ENCODE measurements at regions of chr14 and their contacts with region 1.

Region 1: DNA sequence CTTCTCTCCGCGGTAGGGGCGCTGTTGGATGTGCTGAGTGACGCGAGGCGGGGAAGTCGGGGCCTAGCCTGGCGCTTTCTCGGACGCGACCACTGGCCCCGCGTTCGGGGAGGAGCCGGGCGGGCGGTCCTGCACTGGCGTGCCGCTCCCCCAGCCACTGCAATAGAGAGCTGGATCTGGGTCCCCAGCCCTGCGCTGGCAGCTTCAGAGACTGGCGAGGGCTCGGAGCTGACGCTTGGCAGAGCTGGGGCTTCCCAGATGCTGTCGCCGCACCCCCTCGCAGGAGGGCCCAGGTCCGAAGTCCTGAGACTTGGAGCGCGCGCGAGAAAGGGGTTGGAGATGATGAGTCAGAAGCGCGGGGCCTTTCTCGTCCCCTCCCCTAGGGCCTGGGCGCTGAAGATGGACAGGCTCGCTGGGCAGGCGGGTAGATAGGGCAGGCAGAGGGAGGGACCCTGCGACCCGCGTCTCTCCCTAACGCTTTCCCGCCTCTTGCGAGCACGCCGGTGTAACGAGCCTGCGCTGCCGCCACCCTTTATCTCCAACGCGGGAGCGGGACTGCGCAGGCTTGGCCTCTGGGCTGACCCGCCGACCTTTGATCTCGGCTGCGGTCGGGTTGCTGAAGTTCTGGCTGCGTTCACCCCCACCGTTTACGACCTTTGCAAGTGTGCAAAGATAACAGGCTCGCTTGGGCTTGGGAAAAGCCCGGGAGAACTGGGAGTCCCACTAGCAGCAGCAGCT is 3.0 kb downstream of the TMEM253 start:
- DNase-seq: peak; percentile 87 to 94 (median 92)
- ATAC-seq: peak; percentile 92
- H3K4me3 ChIP-seq: peak overlapping the region; percentile 94
- H3K4me3 Mint-ChIP-seq: peak overlapping the region; percentile 74 to 99 (median 91)
- H3K27ac ChIP-seq: peak overlapping the region; percentile 96
- H3K27ac Mint-ChIP-seq: peak overlapping the region; percentile 25 to 97 (median 89)
- H3K4me1 ChIP-seq: peaks cover 3 to 8% of the 10 kb centered on the region in 2 donors
- H3K4me1 Mint-ChIP-seq: peaks cover 23 to 41% (median 26%) of the 10 kb centered on the region in 7 donors
- H3K27me3 ChIP-seq: peaks cover 0 to 4% of the 10 kb centered on the region in 2 donors
- H3K27me3 Mint-ChIP-seq: peaks cover 0 to 11% (median 0%) of the 10 kb centered on the region in 5 donors

Region 2: DNA sequence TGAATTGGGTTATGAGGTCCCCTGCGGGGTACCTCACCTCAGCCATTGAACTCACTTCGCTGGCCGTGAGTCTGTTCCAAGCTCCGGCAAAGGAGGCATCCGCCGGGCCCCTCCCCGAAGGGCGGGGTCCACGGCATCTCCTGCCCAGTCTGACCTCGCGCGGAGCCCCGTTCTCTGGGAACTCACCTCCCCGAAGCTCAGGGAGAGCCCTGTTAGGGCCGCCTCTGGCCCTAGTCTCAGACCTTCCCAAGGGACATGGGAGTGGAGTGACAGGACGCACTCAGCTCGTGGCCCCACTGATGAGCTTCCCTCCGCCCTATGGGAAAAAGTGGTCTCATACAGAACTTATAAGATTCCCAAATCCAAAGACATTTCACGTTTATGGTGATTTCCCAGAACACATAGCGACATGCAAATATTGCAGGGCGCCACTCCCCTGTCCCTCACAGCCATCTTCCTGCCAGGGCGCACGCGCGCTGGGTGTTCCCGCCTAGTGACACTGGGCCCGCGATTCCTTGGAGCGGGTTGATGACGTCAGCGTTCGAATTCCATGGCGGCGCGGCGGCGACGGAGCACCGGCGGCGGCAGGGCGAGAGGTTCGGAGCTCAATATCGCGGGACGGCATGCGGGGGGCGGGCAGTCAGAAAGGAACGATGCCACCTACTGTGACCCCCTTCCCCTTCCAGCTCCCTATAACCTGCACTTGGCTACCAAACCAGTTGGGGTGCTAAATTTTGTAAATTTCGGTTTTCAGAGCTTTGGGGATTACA is 760.6 kb before region 1 on chr14 and contains the start of gene PARP2:
- CTCF ChIA-PET with region 1: no interaction called
- POLR2A ChIA-PET with region 1: no interaction called
- intact Hi-C with region 1: loop called in 1 of 2 experiments (anchors 5 kb)
- DNase-seq: peak; percentile 82 to 94 (median 93)
- ATAC-seq: peak; percentile 86
- H3K4me3 ChIP-seq: peak within 1 kb of the TSS; percentile 74
- H3K4me3 Mint-ChIP-seq: peak within 1 kb of the TSS; percentile 82 to 99 (median 95)
- H3K27ac ChIP-seq: peak within 1 kb of the TSS; percentile 91
- H3K27ac Mint-ChIP-seq: peak within 1 kb of the TSS; percentile 91 to 98 (median 97)
- H3K4me1 ChIP-seq: peaks cover 4 to 5% of the 10 kb centered on the region in 2 donors
- H3K4me1 Mint-ChIP-seq: peaks cover 6 to 27% (median 18%) of the 10 kb centered on the region in 7 donors
- H3K27me3 ChIP-seq: no peaks in the 10 kb centered on the region
- H3K27me3 Mint-ChIP-seq: peaks cover 0 to 7% (median 0%) of the 10 kb centered on the region in 5 donors
- total RNA-seq, gene PARP2: 15.3 to 24.5 (median 21.3) TPM

Region 3: DNA sequence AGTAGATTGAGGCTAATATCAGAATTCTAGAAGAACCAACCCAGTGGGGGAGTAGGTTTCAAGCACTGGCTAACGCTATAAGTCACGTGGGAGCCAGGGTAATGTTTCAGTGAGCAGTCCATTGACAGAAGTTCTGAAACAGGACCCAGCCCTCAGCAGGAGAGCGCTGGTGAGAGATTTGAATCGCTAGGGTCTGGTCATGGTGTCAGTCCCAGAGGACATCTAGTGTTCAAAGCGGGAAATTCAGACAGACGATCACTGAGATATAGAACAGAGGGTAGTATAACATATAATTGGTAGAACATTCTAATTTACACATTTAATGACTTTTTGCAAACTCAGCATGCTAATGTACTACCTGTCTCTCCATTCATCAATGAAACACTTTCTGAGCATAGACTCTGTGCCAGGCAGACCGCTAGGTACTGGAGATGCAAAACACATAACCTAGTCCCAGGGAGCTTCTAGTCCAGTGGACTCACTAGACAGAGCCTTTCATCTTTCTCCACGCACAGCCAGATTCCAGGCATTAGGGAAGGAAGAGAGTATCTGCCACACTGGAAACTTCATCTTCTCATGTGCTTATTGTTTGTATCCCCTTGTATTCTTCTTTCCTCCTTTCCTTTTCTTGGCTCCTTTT is 248.1 kb before region 1 on chr14:
- CTCF ChIA-PET with region 1: no interaction called
- POLR2A ChIA-PET with region 1: no interaction called
- intact Hi-C with region 1: loop called in 1 of 2 experiments (anchors 1 kb)
- DNase-seq: peak in 7 of 9 donors; percentile 25 to 64 (median 47)
- ATAC-seq: peak; percentile 89
- H3K4me3 ChIP-seq: no peak overlapping the region
- H3K4me3 Mint-ChIP-seq: no peak overlapping the region
- H3K27ac ChIP-seq: no peak overlapping the region
- H3K27ac Mint-ChIP-seq: no peak overlapping the region
- H3K4me1 ChIP-seq: no peaks in the 10 kb centered on the region
- H3K4me1 Mint-ChIP-seq: peaks cover 0 to 7% (median 0%) of the 10 kb centered on the region in 7 donors
- H3K27me3 ChIP-seq: no peaks in the 10 kb centered on the region
- H3K27me3 Mint-ChIP-seq: peaks cover 13 to 35% (median 28%) of the 10 kb centered on the region in 5 donors

Region 4: DNA sequence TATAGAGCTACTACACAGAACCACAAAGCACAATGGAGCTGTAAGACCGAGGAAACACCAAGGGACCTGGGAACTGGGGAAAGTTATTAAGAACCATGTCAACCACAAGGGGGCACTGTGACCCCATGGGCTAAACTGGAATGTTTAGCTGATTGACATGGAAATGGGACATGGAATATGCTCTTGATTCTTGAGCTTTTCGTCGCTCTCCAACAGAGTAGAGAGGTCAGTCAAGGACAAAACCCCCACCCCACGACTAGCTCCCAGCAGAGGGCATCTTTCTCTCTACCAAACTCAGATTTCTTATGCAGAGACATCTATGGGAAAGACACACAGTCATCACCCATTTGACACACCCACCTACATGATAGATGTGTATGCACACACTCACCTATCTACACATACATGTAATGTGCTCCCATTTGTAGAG is 89.1 kb before region 1 on chr14:
- CTCF ChIA-PET with region 1: interaction called, 158 read pairs
- POLR2A ChIA-PET with region 1: interaction called, 24 read pairs
- intact Hi-C with region 1: loop called (anchors 1 kb)
- DNase-seq: peak; percentile 56 to 82 (median 76)
- ATAC-seq: peak; percentile 88
- H3K4me3 ChIP-seq: no peak overlapping the region
- H3K4me3 Mint-ChIP-seq: no peak overlapping the region
- H3K27ac ChIP-seq: no peak overlapping the region
- H3K27ac Mint-ChIP-seq: peak overlapping the region in 1 of 9 donors; percentile 17
- H3K4me1 ChIP-seq: no peaks in the 10 kb centered on the region
- H3K4me1 Mint-ChIP-seq: peaks cover 0 to 5% (median 0%) of the 10 kb centered on the region in 7 donors
- H3K27me3 ChIP-seq: no peaks in the 10 kb centered on the region
- H3K27me3 Mint-ChIP-seq: peaks cover 12 to 29% (median 21%) of the 10 kb centered on the region in 5 donors

Region 5: GRCh38 chr14:21039585-21040369 is 64.1 kb before region 1 on chr14:
- CTCF ChIA-PET with region 1: interaction called, 11 read pairs
- POLR2A ChIA-PET with region 1: no interaction called
- intact Hi-C with region 1: loop called in 1 of 2 experiments (anchors 1 kb)
- DNase-seq: peak in 7 of 9 donors; percentile 17 to 55 (median 46)
- ATAC-seq: peak; percentile 69
- H3K4me3 ChIP-seq: no peak overlapping the region
- H3K4me3 Mint-ChIP-seq: no peak overlapping the region
- H3K27ac ChIP-seq: no peak overlapping the region
- H3K27ac Mint-ChIP-seq: no peak overlapping the region
- H3K4me1 ChIP-seq: no peaks in the 10 kb centered on the region
- H3K4me1 Mint-ChIP-seq: peaks cover 2 to 9% (median 8%) of the 10 kb centered on the region in 7 donors
- H3K27me3 ChIP-seq: no peaks in the 10 kb centered on the region
- H3K27me3 Mint-ChIP-seq: peaks cover 3 to 31% (median 11%) of the 10 kb centered on the region in 5 donors

Region 6: DNA sequence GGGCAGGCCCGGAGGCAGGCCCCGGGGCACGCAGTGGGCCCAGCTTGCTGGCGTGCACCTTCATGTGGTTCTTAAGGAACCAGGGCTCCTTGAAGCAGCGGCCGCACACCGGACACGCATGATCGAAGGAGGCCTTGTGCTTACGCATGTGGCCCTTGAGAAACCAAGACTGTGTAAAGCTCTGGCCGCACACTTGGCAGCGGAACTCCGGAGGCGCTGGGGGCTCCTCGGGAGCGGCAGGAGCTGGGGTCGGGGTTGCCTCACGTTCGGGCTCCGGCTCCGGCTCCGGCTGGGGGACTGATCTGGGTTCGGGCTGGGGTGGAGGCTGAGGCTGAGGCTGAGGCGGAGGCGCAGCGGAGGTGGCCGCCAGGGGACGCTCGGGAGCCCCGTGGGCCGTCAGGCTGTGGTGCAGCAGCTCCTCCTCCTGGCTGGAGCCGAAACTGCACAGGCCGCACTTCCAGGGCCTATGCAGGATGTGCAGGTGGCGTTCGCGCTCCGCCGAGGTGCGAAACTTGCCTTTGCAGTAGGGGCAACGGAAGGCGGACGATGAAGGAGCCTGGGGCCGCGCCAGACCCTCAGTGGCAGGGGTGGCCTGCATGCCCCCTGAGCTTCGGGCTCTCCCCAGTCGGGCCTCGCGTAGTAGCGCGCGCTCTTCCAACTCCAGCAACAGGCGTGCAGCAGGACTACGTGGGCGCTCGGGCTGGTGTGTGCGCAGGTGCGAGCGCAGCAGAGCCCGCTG is 11.4 kb before region 1 on chr14:
- CTCF ChIA-PET with region 1: interaction called, 123 read pairs
- POLR2A ChIA-PET with region 1: interaction called, 53 read pairs
- intact Hi-C with region 1: loop called (anchors 1 kb)
- DNase-seq: peak; percentile 82 to 98 (median 93)
- ATAC-seq: peak; percentile 90
- H3K4me3 ChIP-seq: no peak overlapping the region
- H3K4me3 Mint-ChIP-seq: peak overlapping the region in 1 of 10 donors; percentile 6
- H3K27ac ChIP-seq: no peak overlapping the region
- H3K27ac Mint-ChIP-seq: peak overlapping the region in 8 of 9 donors; percentile 17 to 88 (median 78)
- H3K4me1 ChIP-seq: peaks cover 6 to 14% of the 10 kb centered on the region in 2 donors
- H3K4me1 Mint-ChIP-seq: peaks cover 15 to 37% (median 27%) of the 10 kb centered on the region in 7 donors
- H3K27me3 ChIP-seq: no peaks in the 10 kb centered on the region
- H3K27me3 Mint-ChIP-seq: peaks cover 0 to 17% (median 0%) of the 10 kb centered on the region in 5 donors

Region 7: GRCh38 chr14:21476925-21477681 is 373.2 kb after region 1 on chr14 and contains the starts of genes RAB2B and TOX4:
- CTCF ChIA-PET with region 1: no interaction called
- POLR2A ChIA-PET with region 1: no interaction called
- intact Hi-C with region 1: loop called (anchors 1 to 2 kb)
- DNase-seq: peak; percentile 83 to 98 (median 97)
- ATAC-seq: peak; percentile 99
- H3K4me3 ChIP-seq: peak within 1 kb of the TSS; percentile 99
- H3K4me3 Mint-ChIP-seq: peak within 1 kb of the TSS; percentile 96 to 100 (median 99)
- H3K27ac ChIP-seq: peak within 1 kb of the TSS; percentile 88
- H3K27ac Mint-ChIP-seq: peak within 1 kb of the TSS; percentile 93 to 100 (median 98)
- H3K4me1 ChIP-seq: peaks cover 21 to 22% of the 10 kb centered on the region in 2 donors
- H3K4me1 Mint-ChIP-seq: peaks cover 18 to 74% (median 58%) of the 10 kb centered on the region in 7 donors
- H3K27me3 ChIP-seq: no peaks in the 10 kb centered on the region
- H3K27me3 Mint-ChIP-seq: no peaks in the 10 kb centered on the region
- total RNA-seq, gene RAB2B: 26.6 to 32.8 (median 30.5) TPM
- total RNA-seq, gene TOX4: 78.5 to 116 (median 86.5) TPM

Measured in naive thymus-derived CD4-positive, alpha-beta T cell (primary cell).